ENCODE measurements at regions of chr1 and their contacts with region 1.

Region 1: DNA sequence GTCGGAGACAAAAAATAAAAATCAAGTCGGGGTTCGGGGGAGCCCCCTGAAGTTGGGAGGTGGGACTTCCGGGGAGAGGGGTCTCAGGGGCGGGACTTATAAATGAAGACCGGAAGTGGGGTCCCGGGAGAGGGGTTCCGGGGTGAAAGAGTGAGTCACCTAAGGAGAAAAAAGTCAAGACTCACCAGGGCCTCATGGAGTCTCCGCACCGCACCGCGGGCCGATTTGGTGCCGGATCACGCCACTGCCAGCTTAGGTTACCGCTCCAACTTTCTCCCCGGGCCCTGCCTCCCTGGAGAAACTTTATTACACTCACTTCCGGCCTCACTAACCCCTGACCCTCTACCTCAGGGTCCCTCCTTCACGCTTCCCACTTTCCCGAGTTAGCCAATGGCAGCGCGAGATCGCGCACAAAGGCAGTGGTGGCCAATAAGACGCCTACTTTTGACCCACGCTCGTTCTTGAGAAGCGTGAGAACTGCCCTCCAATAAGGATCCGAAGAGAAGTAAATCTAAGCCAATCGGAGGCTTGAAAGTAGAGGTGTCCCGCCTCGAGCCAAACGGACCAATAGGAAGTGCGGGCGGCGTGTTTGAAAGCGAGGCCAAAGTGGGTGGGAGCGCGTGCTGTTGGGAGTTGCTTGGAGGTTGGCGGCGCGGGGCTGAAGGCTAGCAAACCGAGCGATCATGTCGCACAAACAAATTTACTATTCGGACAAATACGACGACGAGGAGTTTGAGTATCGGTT is at the start of gene CKS1B:
- DNase-seq: peak; percentile 99
- H3K4me3 Mint-ChIP-seq: no peak within 1 kb of the TSS
- H3K27ac Mint-ChIP-seq: no peak within 1 kb of the TSS
- H3K4me1 Mint-ChIP-seq: peaks cover 32% of the 10 kb centered on the region
- H3K27me3 Mint-ChIP-seq: no peaks in the 10 kb centered on the region
- total RNA-seq, gene CKS1B: 283 to 291 TPM

Region 2: GRCh38 chr1:154847891-154848290 is 126.3 kb before region 1 on chr1:
- CTCF ChIA-PET with region 1: no interaction called
- intact Hi-C with region 1: no loop called
- DNase-seq: no peak
- H3K4me3 Mint-ChIP-seq: no peak overlapping the region
- H3K27ac Mint-ChIP-seq: no peak overlapping the region
- H3K4me1 Mint-ChIP-seq: peaks cover 17% of the 10 kb centered on the region
- H3K27me3 Mint-ChIP-seq: peaks cover 5% of the 10 kb centered on the region

Region 3: GRCh38 chr1:154936555-154937084 is 37.6 kb before region 1 on chr1 and contains the start of gene PMVK:
- CTCF ChIA-PET with region 1: no interaction called
- intact Hi-C with region 1: loop called (anchors 1 kb)
- DNase-seq: peak; percentile 97
- H3K4me3 Mint-ChIP-seq: peak within 1 kb of the TSS; percentile 83
- H3K27ac Mint-ChIP-seq: peak within 1 kb of the TSS; percentile 97
- H3K4me1 Mint-ChIP-seq: peaks cover 47% of the 10 kb centered on the region
- H3K27me3 Mint-ChIP-seq: no peaks in the 10 kb centered on the region
- total RNA-seq, gene PMVK: 29.8 to 30.5 TPM

Region 4: GRCh38 chr1:154961497-154962262 is 12.6 kb before region 1 on chr1 and contains the start of gene PYGO2:
- CTCF ChIA-PET with region 1: interaction called, 13 read pairs
- intact Hi-C with region 1: loop called (anchors 1 kb)
- DNase-seq: peak; percentile 86
- H3K4me3 Mint-ChIP-seq: peak within 1 kb of the TSS; percentile 96
- H3K27ac Mint-ChIP-seq: peak within 1 kb of the TSS; percentile 94
- H3K4me1 Mint-ChIP-seq: peaks cover 40% of the 10 kb centered on the region
- H3K27me3 Mint-ChIP-seq: no peaks in the 10 kb centered on the region
- total RNA-seq, gene PYGO2: 35.6 to 36.3 TPM

Region 5: GRCh38 chr1:155050560-155051341 is 76.5 kb after region 1 on chr1 and contains the start of gene ADAM15:
- CTCF ChIA-PET with region 1: interaction called, 6 read pairs
- intact Hi-C with region 1: loop called (anchors 1 kb)
- DNase-seq: peak; percentile 85
- H3K4me3 Mint-ChIP-seq: peak within 1 kb of the TSS; percentile 84
- H3K27ac Mint-ChIP-seq: no peak within 1 kb of the TSS
- H3K4me1 Mint-ChIP-seq: peaks cover 24% of the 10 kb centered on the region
- H3K27me3 Mint-ChIP-seq: no peaks in the 10 kb centered on the region
- total RNA-seq, gene ADAM15: 53.8 to 55.8 TPM

Region 6: GRCh38 chr1:155135415-155136028 is 161.3 kb after region 1 on chr1 and contains the start of gene SLC50A1:
- CTCF ChIA-PET with region 1: no interaction called
- intact Hi-C with region 1: loop called (anchors 2 kb)
- DNase-seq: peak; percentile 96
- H3K4me3 Mint-ChIP-seq: peak within 1 kb of the TSS; percentile 99
- H3K27ac Mint-ChIP-seq: peak within 1 kb of the TSS; percentile 100
- H3K4me1 Mint-ChIP-seq: peaks cover 32% of the 10 kb centered on the region
- H3K27me3 Mint-ChIP-seq: no peaks in the 10 kb centered on the region
- total RNA-seq, gene SLC50A1: 48.4 to 52.7 TPM

Measured in activated naive CD4-positive, alpha-beta T cell treated with anti-CD3 and anti-CD28 coated beads for 36 hours (primary cell).